HEK293 (cell line): ENCODE measurements at regions of chr19 and their contacts with region 1.

Region 1: DNA sequence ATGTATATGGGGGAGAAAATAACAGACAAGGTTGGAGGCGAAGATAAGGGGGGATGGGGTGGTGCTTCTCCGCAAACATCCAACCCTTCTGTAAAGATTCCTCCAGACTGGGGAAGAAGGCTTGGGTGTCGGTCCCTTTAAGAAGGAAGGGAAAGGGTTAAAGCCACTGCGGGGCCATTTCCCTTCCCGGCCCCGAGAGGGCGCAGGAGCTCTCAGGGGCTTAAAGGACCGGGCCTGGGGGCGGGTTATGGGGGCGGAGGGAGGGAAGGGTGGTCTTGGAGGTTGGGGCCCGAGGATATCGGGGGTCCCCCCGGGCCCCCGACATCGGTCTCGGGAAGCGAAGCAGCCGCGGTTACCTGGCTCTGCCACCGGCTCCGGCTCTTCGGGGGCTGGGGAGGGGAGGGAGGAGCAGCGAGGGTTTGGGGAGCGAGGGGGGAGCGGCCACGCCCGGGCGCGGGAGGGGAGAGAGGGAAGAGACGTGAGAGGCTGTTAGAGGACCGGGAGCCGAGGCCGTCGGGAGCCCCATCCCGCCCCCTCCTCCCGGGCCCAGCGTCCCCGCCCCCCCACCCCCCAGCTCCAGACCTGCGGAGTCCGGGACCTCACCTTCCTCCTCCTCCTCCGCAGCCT is 2.8 kb downstream of the TNNT1 start:
- H3K4me3 ChIP-seq: peak overlapping the region; percentile 46
- H3K27ac ChIP-seq: no peak overlapping the region
- H3K4me1 ChIP-seq: no peaks in the 10 kb centered on the region
- CTCF ChIP-seq: peak; percentile 61; the same call in 1 of the 2 replicates

Region 2: GRCh38 chr19:54937926-54938325 is 208.3 kb before region 1 on chr19:
- CTCF ChIA-PET with region 1: no interaction called
- POLR2A ChIA-PET with region 1: no interaction called
- H3K4me3 ChIP-seq: no peak overlapping the region
- H3K27ac ChIP-seq: no peak overlapping the region
- H3K4me1 ChIP-seq: no peaks in the 10 kb centered on the region
- CTCF ChIP-seq: no peak

Region 3: DNA sequence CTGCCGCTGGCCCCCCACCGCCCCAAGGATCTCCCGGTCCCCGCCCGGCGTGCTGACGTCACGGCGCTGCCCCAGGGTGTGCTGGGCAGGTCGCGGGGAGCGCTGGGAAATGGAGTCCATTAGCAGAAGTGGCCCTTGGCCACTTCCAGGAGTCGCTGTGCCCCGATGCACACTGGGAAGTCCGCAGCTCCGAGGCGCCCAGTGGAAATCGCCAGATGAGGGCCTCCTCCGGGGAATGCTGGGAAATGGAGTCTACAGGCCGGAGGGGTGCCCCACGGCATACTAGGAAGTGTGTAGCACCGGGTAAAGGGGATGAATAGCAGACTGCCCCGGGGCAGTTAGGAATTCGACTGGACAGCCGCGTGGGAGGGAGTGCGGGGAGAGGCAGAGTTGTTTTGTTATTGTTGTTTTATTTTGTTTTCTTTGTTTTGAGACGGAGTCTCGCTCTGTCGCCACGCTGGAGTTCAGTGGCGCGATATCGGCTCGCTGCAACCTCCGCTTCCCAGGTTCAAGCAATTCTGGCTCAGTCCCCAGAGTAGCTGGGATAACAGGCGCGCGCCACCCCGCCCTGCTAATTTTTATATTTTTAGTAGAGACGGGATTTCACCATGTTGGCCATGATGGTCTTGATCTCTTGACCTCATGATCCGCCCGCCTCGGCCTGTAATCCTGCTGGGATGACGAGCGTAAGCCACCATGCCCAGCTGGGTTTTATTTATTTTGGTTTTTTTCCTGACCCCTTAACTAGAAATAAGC is 28.4 kb before region 1 on chr19 and contains the start of gene PPP1R12C:
- CTCF ChIA-PET with region 1: interaction called, 6 read pairs
- POLR2A ChIA-PET with region 1: interaction called, 16 read pairs
- H3K4me3 ChIP-seq: peak within 1 kb of the TSS; percentile 78
- H3K27ac ChIP-seq: peak within 1 kb of the TSS; percentile 78; the same call in 1 of the 2 replicates
- H3K4me1 ChIP-seq: peaks cover 18% of the 10 kb centered on the region
- CTCF ChIP-seq: 0 out of 2 replicates have a peak, but pooled peaks have one; percentile 29

Region 4: DNA sequence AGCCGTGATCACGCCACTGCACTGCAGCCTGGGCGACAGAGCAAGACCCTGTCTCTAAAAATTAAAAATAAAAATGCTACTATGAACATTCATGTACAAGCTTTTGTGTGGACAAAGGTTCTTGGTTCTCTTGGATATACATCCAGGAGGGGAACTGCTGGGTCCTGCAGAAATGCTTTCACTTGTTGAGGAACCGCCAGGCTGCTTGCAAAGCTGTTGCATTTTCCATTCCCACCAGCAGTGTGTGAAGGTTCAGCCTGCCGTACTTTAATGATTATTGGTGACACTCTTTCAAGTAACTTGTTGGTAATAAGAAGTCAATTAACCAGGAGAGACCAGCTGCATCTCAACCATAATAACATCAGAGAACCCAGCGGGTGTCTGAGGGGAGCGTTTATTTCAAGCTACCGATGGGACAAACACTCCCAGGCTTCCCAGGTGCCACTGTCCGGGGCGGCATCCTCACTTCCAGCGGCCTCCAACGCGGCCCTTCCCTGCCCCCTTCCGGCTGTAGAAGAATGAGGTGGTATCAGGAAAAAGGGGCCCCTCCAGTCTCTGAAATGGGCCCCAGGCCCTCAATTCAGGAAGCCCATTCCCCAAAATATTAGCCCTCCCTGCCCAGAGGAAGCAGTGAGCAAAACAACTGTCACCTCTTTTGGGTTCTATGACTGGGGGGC is 13.6 kb before region 1 on chr19:
- CTCF ChIA-PET with region 1: interaction called, 19 read pairs
- POLR2A ChIA-PET with region 1: interaction called, 3 read pairs
- H3K4me3 ChIP-seq: no peak overlapping the region
- H3K27ac ChIP-seq: no peak overlapping the region
- H3K4me1 ChIP-seq: no peaks in the 10 kb centered on the region
- CTCF ChIP-seq: no peak

Region 5: GRCh38 chr19:55160128-55160985 is 14.2 kb after region 1 on chr19:
- CTCF ChIA-PET with region 1: interaction called, 107 read pairs
- POLR2A ChIA-PET with region 1: interaction called, 19 read pairs
- H3K4me3 ChIP-seq: no peak overlapping the region
- H3K27ac ChIP-seq: 0 out of 2 replicates have a peak overlapping the region, but pooled peaks have one; percentile 10
- H3K4me1 ChIP-seq: peaks cover 6% of the 10 kb centered on the region
- CTCF ChIP-seq: peak; percentile 94

Region 6: GRCh38 chr19:55166530-55167268 is 20.5 kb after region 1 on chr19 and contains the start of gene DNAAF3:
- CTCF ChIA-PET with region 1: interaction called, 47 read pairs
- POLR2A ChIA-PET with region 1: interaction called, 4 read pairs
- H3K4me3 ChIP-seq: peak within 1 kb of the TSS; percentile 67
- H3K27ac ChIP-seq: peak within 1 kb of the TSS; percentile 54
- H3K4me1 ChIP-seq: peaks cover 2% of the 10 kb centered on the region; the same call in 1 of the 2 replicates
- CTCF ChIP-seq: peak; percentile 17; the same call in 1 of the 2 replicates

Region 7: GRCh38 chr19:55197531-55197930 is 51.3 kb after region 1 on chr19:
- CTCF ChIA-PET with region 1: interaction called, 12 read pairs
- POLR2A ChIA-PET with region 1: no interaction called
- H3K4me3 ChIP-seq: no peak overlapping the region
- H3K27ac ChIP-seq: no peak overlapping the region
- H3K4me1 ChIP-seq: no peaks in the 10 kb centered on the region
- CTCF ChIP-seq: no peak